CD4-positive, alpha-beta memory T cell (primary cell): ENCODE measurements at regions of chr6 and their contacts with region 1.

Region 1: DNA sequence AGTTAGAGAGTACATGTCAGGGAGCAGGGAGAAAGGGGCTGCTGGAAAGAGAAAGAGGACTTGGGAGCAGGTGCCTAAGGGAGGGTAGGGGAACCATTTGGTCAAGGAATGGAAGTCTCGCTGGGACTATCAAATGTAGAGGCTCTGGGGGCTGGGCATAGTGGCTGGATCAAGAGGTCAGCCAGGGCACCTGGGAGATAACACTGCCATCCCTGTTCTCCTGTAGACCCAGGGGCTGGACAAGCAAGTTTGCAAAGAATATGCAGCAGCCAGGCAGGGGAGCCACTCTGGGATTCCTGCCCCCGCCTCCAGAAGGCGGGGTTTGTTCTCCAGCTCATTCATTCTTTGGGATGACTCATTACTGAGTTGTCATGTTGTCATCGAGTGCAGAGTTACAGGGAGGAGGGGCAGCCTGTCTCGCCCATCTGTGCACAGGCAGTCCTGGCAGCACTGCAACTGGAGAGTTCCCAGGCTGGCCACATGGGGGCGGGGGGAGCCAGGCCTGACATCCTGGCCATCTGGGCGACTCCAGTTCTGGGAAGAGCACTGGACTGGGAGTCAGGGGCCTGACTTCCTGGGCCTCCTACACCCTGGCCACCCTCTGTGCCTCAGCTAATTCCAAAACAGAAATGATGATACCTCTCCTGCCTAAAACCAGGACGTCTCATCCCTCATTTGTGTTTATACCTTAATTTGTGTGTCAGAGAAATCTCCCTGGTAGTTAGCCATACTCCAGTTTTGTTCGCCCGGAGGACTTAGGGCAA is 28.2 kb upstream of the ZFAND3 start:
- DNase-seq: peak; percentile 55 to 87 (median 63)
- H3K4me3 ChIP-seq: no peak overlapping the region
- H3K4me3 Mint-ChIP-seq: no peak overlapping the region
- H3K27ac ChIP-seq: no peak overlapping the region
- H3K27ac Mint-ChIP-seq: peak overlapping the region in 1 of 7 donors; percentile 38
- H3K4me1 ChIP-seq: no peaks in the 10 kb centered on the region
- H3K4me1 Mint-ChIP-seq: peaks cover 2 to 9% (median 5%) of the 10 kb centered on the region in 4 donors
- H3K27me3 ChIP-seq: no peaks in the 10 kb centered on the region
- H3K27me3 Mint-ChIP-seq: peaks cover 0 to 1% of the 10 kb centered on the region in 2 donors

Region 2: GRCh38 chr6:37624121-37624985 is 167.0 kb before region 1 on chr6:
- CTCF ChIA-PET with region 1: no interaction called
- POLR2A ChIA-PET with region 1: no interaction called
- intact Hi-C with region 1: no loop called
- DNase-seq: no peak
- H3K4me3 ChIP-seq: no peak overlapping the region
- H3K4me3 Mint-ChIP-seq: peak overlapping the region in 5 of 8 donors; percentile 21 to 59 (median 53)
- H3K27ac ChIP-seq: no peak overlapping the region
- H3K27ac Mint-ChIP-seq: peak overlapping the region in 3 of 7 donors; percentile 32 to 69 (median 59)
- H3K4me1 ChIP-seq: peaks cover 45% of the 10 kb centered on the region
- H3K4me1 Mint-ChIP-seq: peaks cover 25 to 55% (median 43%) of the 10 kb centered on the region in 4 donors
- H3K27me3 ChIP-seq: no peaks in the 10 kb centered on the region
- H3K27me3 Mint-ChIP-seq: peaks cover 0 to 6% of the 10 kb centered on the region in 2 donors

Region 3: GRCh38 chr6:37705239-37706051 is 85.9 kb before region 1 on chr6:
- CTCF ChIA-PET with region 1: no interaction called
- POLR2A ChIA-PET with region 1: no interaction called
- intact Hi-C with region 1: loop called (anchors 1 kb)
- DNase-seq: peak; percentile 76 to 86 (median 80)
- H3K4me3 ChIP-seq: peak overlapping the region; percentile 30 to 49
- H3K4me3 Mint-ChIP-seq: peak overlapping the region; percentile 83 to 91 (median 86)
- H3K27ac ChIP-seq: no peak overlapping the region
- H3K27ac Mint-ChIP-seq: peak overlapping the region; percentile 77 to 94 (median 86)
- H3K4me1 ChIP-seq: peaks cover 8% of the 10 kb centered on the region
- H3K4me1 Mint-ChIP-seq: peaks cover 8 to 21% (median 13%) of the 10 kb centered on the region in 4 donors
- H3K27me3 ChIP-seq: no peaks in the 10 kb centered on the region
- H3K27me3 Mint-ChIP-seq: no peaks in the 10 kb centered on the region

Region 4: GRCh38 chr6:37860226-37860839 is 69.0 kb after region 1 on chr6:
- CTCF ChIA-PET with region 1: interaction called, 7 read pairs
- POLR2A ChIA-PET with region 1: interaction called, 3 read pairs
- intact Hi-C with region 1: loop called (anchors 1 kb)
- DNase-seq: peak; percentile 7 to 41 (median 12)
- H3K4me3 ChIP-seq: no peak overlapping the region
- H3K4me3 Mint-ChIP-seq: no peak overlapping the region
- H3K27ac ChIP-seq: no peak overlapping the region
- H3K27ac Mint-ChIP-seq: peak overlapping the region in 2 of 7 donors; percentile 19 to 68
- H3K4me1 ChIP-seq: peaks cover 30% of the 10 kb centered on the region
- H3K4me1 Mint-ChIP-seq: peaks cover 38 to 65% (median 46%) of the 10 kb centered on the region in 4 donors
- H3K27me3 ChIP-seq: no peaks in the 10 kb centered on the region
- H3K27me3 Mint-ChIP-seq: no peaks in the 10 kb centered on the region

Region 5: DNA sequence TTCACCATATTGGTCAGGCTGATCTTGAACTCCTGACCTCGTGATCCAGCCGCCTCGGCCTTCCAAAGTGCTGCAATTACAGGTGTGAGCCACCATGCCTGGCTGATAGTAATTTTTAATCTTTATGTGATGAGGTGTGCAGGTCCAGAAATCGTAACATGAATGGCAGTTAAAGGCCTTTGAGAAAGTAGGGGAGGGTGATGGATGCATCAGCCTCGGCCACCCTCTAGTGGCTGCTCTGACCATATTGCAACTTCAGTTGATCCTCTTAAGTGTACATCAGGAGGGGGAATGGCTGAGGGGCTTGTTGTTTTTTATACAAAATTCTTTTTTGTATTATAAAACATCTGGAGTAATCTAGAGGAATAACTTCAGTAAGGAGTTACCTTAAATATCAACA is 221.2 kb after region 1 on chr6:
- CTCF ChIA-PET with region 1: interaction called, 3 read pairs
- POLR2A ChIA-PET with region 1: no interaction called
- intact Hi-C with region 1: loop called (anchors 1 kb)
- DNase-seq: peak in 3 of 5 donors; percentile 3 to 5 (median 4)
- H3K4me3 ChIP-seq: no peak overlapping the region
- H3K4me3 Mint-ChIP-seq: peak overlapping the region in 1 of 8 donors; percentile 52
- H3K27ac ChIP-seq: no peak overlapping the region
- H3K27ac Mint-ChIP-seq: no peak overlapping the region
- H3K4me1 ChIP-seq: no peaks in the 10 kb centered on the region
- H3K4me1 Mint-ChIP-seq: peaks cover 22 to 34% (median 24%) of the 10 kb centered on the region in 4 donors
- H3K27me3 ChIP-seq: no peaks in the 10 kb centered on the region
- H3K27me3 Mint-ChIP-seq: no peaks in the 10 kb centered on the region

Region 6: GRCh38 chr6:38671885-38672467 is 880.6 kb after region 1 on chr6:
- CTCF ChIA-PET with region 1: no interaction called
- POLR2A ChIA-PET with region 1: no interaction called
- intact Hi-C with region 1: loop called (anchors 2 kb)
- DNase-seq: peak; percentile 33 to 46 (median 42)
- H3K4me3 ChIP-seq: no peak overlapping the region
- H3K4me3 Mint-ChIP-seq: no peak overlapping the region
- H3K27ac ChIP-seq: no peak overlapping the region
- H3K27ac Mint-ChIP-seq: peak overlapping the region in 2 of 7 donors; percentile 22 to 51
- H3K4me1 ChIP-seq: peaks cover 9% of the 10 kb centered on the region
- H3K4me1 Mint-ChIP-seq: peaks cover 9 to 21% (median 17%) of the 10 kb centered on the region in 4 donors
- H3K27me3 ChIP-seq: no peaks in the 10 kb centered on the region
- H3K27me3 Mint-ChIP-seq: no peaks in the 10 kb centered on the region